Endothelial cell of umbilical vein (primary cell): ENCODE measurements at regions of chr10 and their contacts with region 1.

Region 1: GRCh38 chr10:4813023-4813422 is 13.0 kb upstream of the AKR1E2 start:
- DNase-seq: peak; percentile 22
- H3K4me3 ChIP-seq: no peak overlapping the region
- H3K27ac ChIP-seq: no peak overlapping the region
- H3K4me1 ChIP-seq: peaks cover 31% of the 10 kb centered on the region
- H3K27me3 ChIP-seq: peaks cover 0 to 2% of the 10 kb centered on the region in 2 experiments
- CTCF ChIP-seq: no peak
- POLR2A ChIP-seq: no peak

Region 2: DNA sequence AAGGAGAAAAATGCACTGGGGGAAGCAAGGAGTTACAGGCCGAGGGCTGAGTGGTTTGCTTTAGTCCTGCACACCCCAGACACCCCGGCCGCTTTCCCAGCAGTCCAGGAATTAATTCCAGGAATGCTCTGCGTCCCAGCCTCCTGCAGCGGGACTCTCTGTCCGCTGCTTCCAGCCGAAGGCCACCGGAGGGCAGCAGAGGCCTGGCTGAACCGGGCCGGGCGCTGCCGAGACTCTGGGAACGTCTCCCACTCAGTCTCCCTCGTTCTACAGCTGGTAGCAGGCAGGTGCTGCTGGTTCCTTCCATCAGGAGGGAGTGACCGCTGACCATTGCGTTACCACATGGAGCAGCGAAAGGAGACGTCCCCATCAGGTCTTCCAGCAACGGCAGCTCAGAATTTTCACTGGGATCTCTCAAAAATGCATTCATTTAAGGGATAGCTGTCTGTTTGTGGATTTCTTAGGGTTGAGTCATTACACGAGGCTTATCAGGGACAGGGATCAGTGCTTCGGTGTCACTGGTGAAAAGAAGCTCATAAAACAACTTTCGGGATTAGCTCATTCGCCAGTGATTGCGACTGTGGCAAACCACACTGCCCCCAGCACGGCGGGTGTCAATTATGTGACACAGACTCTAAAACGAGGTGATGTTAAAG is 1615.5 kb before region 1 on chr10:
- CTCF ChIA-PET with region 1: interaction called, 9 read pairs
- POLR2A ChIA-PET with region 1: no interaction called
- dilution Hi-C with region 1: no loop called
- intact Hi-C with region 1: loop called (anchors 2 kb)
- DNase-seq: peak; percentile 86
- H3K4me3 ChIP-seq: peak overlapping the region in 2 of 3 experiments; percentile 1 to 6
- H3K27ac ChIP-seq: no peak overlapping the region
- H3K4me1 ChIP-seq: peaks cover 12% of the 10 kb centered on the region
- H3K27me3 ChIP-seq: peaks cover 0 to 6% of the 10 kb centered on the region in 2 experiments
- CTCF ChIP-seq: peak; percentile 93 to 96
- POLR2A ChIP-seq: no peak

Region 3: DNA sequence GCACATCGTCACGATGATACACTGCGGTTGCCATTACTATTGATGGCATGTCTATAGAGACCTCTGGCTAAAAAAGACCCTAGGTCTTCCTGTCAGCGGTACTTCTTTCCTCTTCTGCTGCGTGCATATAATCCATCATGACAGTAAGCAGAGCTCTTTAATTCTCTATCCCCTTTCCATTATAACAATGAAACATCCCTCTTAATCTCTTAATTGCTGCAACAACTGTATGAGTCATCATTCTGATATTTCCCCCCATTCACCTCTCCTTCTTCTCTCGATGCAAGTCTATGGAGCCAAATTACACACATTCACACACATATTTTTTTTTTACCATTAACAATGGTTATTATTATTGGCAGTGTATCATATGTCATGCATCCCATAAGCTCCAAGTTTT is 32.2 kb before region 1 on chr10:
- CTCF ChIA-PET with region 1: interaction called, 53 read pairs
- POLR2A ChIA-PET with region 1: interaction called, 4 read pairs
- dilution Hi-C with region 1: no loop called
- intact Hi-C with region 1: loop called (anchors 1 kb)
- DNase-seq: peak; percentile 94
- H3K4me3 ChIP-seq: peak overlapping the region in 1 of 3 experiments; percentile 64
- H3K27ac ChIP-seq: peak overlapping the region; percentile 75
- H3K4me1 ChIP-seq: peaks cover 47% of the 10 kb centered on the region
- H3K27me3 ChIP-seq: no peaks in the 10 kb centered on the region
- CTCF ChIP-seq: no peak
- POLR2A ChIP-seq: peak; percentile 61

Region 4: GRCh38 chr10:4839401-4839800 is 26.4 kb after region 1 on chr10:
- CTCF ChIA-PET with region 1: interaction called, 19 read pairs
- POLR2A ChIA-PET with region 1: no interaction called
- dilution Hi-C with region 1: no loop called
- intact Hi-C with region 1: no loop called
- DNase-seq: no peak
- H3K4me3 ChIP-seq: no peak overlapping the region
- H3K27ac ChIP-seq: no peak overlapping the region
- H3K4me1 ChIP-seq: no peaks in the 10 kb centered on the region
- H3K27me3 ChIP-seq: no peaks in the 10 kb centered on the region
- CTCF ChIP-seq: peak in 1 of 2 donors; percentile 1
- POLR2A ChIP-seq: no peak

Region 5: GRCh38 chr10:5434017-5434753 is 621.2 kb after region 1 on chr10:
- CTCF ChIA-PET with region 1: interaction called, 69 read pairs
- POLR2A ChIA-PET with region 1: no interaction called
- dilution Hi-C with region 1: no loop called
- intact Hi-C with region 1: loop called (anchors 2 kb)
- DNase-seq: peak; percentile 67
- H3K4me3 ChIP-seq: no peak overlapping the region
- H3K27ac ChIP-seq: no peak overlapping the region
- H3K4me1 ChIP-seq: no peaks in the 10 kb centered on the region
- H3K27me3 ChIP-seq: no peaks in the 10 kb centered on the region
- CTCF ChIP-seq: peak; percentile 42 to 50
- POLR2A ChIP-seq: no peak